ENCODE measurements at regions of chr17 and their contacts with region 1.

Region 1: GRCh38 chr17:21457051-21458026 is 81.2 kb downstream of the KCNJ12 start:
- DNase-seq: peak; percentile 86
- H3K4me3 ChIP-seq: no peak overlapping the region
- H3K27ac ChIP-seq: no peak overlapping the region
- H3K4me1 ChIP-seq: peaks cover 4% of the 10 kb centered on the region
- H3K27me3 ChIP-seq: no peaks in the 10 kb centered on the region
- CTCF ChIP-seq: peak; percentile 73 to 93
- POLR2A ChIP-seq: no peak

Region 2: DNA sequence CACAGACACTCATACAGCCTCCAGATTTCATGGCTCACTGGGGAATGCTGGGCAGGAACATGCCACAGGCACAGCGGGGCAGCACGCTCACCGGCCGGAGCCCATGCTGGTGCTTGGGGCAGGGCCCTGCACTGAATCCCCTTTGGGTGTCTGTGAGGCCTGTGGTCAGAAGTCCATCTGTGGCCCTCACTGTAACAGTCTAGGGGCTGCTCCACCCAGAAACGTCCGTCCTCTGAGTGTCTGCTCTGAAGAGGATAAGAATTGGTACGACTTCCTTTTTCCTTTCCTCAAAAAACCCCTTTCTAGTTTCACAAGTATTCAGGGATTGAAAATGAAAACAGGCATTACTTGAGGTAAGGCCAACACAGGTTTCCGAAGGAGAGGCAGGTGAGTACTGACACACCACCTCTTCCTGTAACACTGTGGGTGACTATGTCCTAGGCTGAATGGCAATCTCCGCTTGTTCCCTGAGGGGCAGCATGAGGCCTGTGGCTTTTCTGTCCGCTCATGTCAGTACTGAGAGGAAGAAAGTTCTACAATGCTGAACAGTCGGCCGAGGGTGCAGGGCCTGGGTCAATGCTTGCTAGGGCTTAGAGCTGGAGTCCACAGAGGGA is 285.9 kb before region 1 on chr17:
- CTCF ChIA-PET with region 1: no interaction called
- POLR2A ChIA-PET with region 1: no interaction called
- dilution Hi-C with region 1: no loop called
- intact Hi-C with region 1: no loop called
- DNase-seq: no peak
- H3K4me3 ChIP-seq: no peak overlapping the region
- H3K27ac ChIP-seq: no peak overlapping the region
- H3K4me1 ChIP-seq: no peaks in the 10 kb centered on the region
- H3K27me3 ChIP-seq: no peaks in the 10 kb centered on the region
- CTCF ChIP-seq: no peak
- POLR2A ChIP-seq: no peak

Region 3: DNA sequence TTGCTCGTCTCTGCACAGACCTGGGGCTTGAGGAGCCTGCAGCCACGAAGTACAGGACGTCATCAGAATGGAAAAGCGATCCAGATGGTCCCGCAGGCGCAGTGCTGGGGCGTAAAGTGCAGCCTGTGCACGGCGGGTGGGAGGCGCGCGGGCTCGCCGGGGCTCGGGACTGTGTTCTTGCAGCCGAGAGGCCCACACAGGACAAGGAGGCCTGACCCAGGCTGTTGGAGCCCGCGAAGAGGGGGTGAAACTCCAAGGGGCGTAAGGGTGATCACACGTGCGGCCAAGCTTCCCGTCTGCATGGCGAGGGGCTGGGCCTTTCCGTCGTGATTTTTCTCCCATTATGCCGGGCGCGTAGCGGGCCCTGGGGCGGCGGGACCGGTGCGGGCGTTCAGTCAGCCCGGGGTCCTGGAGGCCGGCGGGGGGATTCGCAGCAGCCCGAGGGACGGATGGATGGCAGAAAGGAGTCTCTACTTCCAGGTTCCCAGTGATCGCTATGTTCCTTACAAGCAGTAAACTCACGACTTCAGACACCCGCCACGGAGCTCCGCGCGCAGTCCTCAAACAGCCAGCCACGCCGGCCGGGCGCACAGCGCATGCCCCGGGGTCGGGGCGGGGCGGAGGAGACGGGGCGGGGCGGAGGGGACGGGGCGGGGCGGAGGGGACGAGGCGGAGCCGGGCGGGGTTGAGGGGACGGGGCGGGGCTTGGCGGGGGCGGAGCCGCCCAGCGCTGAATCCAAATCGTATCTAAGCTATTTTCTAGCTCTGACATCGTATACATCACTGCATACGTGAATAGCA is 93.9 kb after region 1 on chr17:
- CTCF ChIA-PET with region 1: interaction called, 10 read pairs
- POLR2A ChIA-PET with region 1: interaction called, 4 read pairs
- dilution Hi-C with region 1: no loop called
- intact Hi-C with region 1: loop called (anchors 1 kb)
- DNase-seq: peak; percentile 88
- H3K4me3 ChIP-seq: peak overlapping the region; percentile 54 to 82 (median 75)
- H3K27ac ChIP-seq: peak overlapping the region; percentile 41
- H3K4me1 ChIP-seq: peaks cover 7% of the 10 kb centered on the region
- H3K27me3 ChIP-seq: no peaks in the 10 kb centered on the region
- CTCF ChIP-seq: no peak
- POLR2A ChIP-seq: peak; percentile 75